ENCODE measurements at regions of chr3 and their contacts with region 1.

Region 1: DNA sequence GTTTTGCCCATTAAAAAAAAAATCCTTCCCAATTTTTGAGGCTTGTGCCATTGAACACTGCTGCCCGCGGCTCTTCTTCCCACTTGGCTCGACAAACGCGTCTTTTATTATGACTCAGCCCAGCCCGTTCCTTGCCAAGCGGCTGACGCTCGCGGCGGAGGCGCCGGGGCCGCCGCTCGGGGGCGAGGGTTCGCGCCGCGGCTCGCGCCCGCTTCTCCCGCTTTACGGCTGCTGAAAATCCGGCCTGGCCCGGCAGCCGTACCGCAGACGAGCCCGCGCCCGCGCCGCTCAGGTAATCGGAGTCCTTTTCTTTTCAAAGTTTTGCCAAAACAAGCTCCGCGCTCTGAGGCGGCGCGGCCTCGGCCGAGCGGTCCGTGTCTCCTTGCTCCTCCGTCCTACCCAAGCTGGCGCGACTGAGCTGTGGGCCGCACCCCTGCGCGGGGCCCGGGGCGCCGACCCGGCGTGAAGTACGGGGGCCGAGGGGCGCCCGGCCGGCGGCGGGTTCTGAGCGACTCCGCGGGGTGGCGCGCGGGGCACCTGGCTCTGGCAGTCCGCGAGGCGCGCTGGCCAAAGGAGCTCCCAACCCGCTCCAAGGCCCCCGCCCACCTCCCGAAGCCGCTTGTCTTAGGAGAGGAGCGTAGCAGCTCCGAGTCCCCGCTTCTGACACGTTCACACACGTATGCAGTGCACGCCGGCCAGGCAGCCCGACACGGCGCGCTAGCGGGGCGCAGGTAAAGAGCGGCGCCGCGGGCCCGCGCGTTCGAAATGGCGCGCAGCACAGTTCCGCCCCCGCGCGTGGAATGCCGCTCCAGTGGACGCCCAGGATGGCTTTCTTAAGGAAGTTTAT is 418.2 kb upstream of the NAALADL2 start:
- DNase-seq: peak; percentile 91 to 95
- ATAC-seq: peak; percentile 95
- H3K4me3 ChIP-seq: peak overlapping the region; percentile 59 to 99
- H3K27ac ChIP-seq: peak overlapping the region; percentile 97 to 99
- H3K4me1 ChIP-seq: peaks cover 0 to 4% of the 10 kb centered on the region in 2 donors
- H3K27me3 ChIP-seq: no peaks in the 10 kb centered on the region

Region 2: DNA sequence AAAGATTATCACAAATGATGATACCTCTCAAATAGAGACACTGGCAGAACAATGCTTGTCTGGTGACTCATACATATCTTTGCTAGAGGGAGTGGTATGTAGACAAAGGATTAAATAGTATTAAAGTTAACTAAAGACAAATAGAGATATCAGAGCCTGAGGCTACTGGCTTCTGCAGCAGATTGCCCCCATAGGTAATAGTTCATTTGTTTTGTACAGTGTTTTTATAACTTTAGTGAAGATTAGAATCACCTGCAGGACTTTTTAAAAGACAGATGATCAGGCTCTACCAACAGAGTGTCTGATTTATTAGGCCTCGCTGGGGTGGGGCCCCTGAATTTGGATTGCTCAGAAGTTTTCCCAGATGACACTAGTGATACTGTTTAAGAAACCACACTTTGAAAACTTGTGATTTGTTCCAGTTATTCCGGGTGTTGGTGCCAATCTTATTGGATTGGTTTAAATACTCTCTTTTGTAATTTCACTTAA is 514.6 kb after region 1 on chr3:
- intact Hi-C with region 1: loop called in 1 of 2 experiments (anchors 5 kb)
- DNase-seq: no peak
- ATAC-seq: no peak
- H3K4me3 ChIP-seq: no peak overlapping the region
- H3K27ac ChIP-seq: no peak overlapping the region
- H3K4me1 ChIP-seq: peaks cover 2 to 5% of the 10 kb centered on the region in 2 donors
- H3K27me3 ChIP-seq: no peaks in the 10 kb centered on the region

Measured in aorta (tissue), 5 donors.